ENCODE measurements at regions of chr22 and their contacts with region 1.

Region 1: GRCh38 chr22:39954584-39955055 is 5.6 kb upstream of the TMA7B start:
- DNase-seq: no peak
- H3K4me3 ChIP-seq: no peak overlapping the region
- H3K27ac ChIP-seq: no peak overlapping the region
- H3K4me1 ChIP-seq: peaks cover 0 to 5% (median 2%) of the 10 kb centered on the region in 4 experiments; a peak in 3 of 7 replicates
- H3K27me3 ChIP-seq: no peaks in the 10 kb centered on the region; a peak in 2 of 7 replicates
- CTCF ChIP-seq: no peak
- EP300 ChIP-seq: no peak
- POLR2A ChIP-seq: no peak
- RAD21 ChIP-seq: no peak

Region 2: GRCh38 chr22:39900306-39901227 is 54.1 kb before region 1 on chr22 and contains the start of gene GRAP2:
- CTCF ChIA-PET with region 1: no interaction called
- POLR2A ChIA-PET with region 1: no interaction called
- DNase-seq: no peak
- H3K4me3 ChIP-seq: no peak within 1 kb of the TSS
- H3K27ac ChIP-seq: no peak within 1 kb of the TSS
- H3K4me1 ChIP-seq: no peaks in the 10 kb centered on the region
- H3K27me3 ChIP-seq: no peaks in the 10 kb centered on the region
- CTCF ChIP-seq: no peak
- EP300 ChIP-seq: no peak
- POLR2A ChIP-seq: no peak
- RAD21 ChIP-seq: no peak
- total RNA-seq, gene GRAP2: not detected in 2 replicates

Region 3: GRCh38 chr22:39927544-39927943 is 27.1 kb before region 1 on chr22:
- CTCF ChIA-PET with region 1: interaction called, 16 read pairs
- POLR2A ChIA-PET with region 1: no interaction called
- DNase-seq: peak in 1 of 2 experiments; percentile 53
- H3K4me3 ChIP-seq: no peak overlapping the region
- H3K27ac ChIP-seq: no peak overlapping the region
- H3K4me1 ChIP-seq: peaks cover 0 to 2% (median 0%) of the 10 kb centered on the region in 4 experiments; a peak in 2 of 7 replicates
- H3K27me3 ChIP-seq: peaks cover 0 to 2% (median 0%) of the 10 kb centered on the region in 4 experiments; a peak in 1 of 7 replicates
- CTCF ChIP-seq: peak; percentile 65 to 83 (median 79)
- EP300 ChIP-seq: no peak
- POLR2A ChIP-seq: no peak
- RAD21 ChIP-seq: peak; percentile 63 to 74

Region 4: DNA sequence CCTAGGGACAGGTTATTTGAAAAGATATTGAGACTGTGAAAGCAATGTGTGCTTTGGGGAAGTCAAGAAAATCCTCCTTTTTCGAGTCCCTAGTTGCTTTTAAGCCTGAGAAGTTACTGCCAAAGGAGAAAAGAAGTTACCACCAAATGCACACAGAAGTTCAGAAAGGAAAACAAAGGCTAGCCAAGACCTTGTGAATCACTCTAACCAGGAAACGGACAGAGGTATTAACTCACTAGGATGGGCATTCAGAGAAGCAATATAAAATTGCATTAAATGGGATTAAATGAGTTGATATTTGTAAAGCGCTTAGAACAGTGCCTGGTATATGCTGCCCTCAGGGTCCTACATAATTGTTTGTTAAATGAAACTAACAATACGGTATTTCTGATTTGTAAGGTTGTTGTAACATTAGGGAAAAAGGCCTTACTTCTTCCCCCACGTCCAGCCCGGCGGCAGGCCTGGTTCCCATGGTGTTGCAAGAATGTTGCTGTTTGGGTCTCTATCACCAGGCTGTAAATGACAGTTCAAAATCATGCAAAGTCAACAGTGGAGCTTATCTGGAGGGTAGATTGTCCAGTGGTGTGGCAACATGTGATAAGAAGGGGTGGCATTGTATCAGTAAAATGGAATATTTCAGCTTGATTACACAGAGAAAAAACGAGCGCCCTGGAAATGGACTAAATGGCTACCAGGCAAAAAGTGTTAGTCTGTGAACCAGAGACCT is 12.6 kb after region 1 on chr22:
- CTCF ChIA-PET with region 1: interaction called, 18 read pairs
- POLR2A ChIA-PET with region 1: no interaction called
- DNase-seq: no peak
- H3K4me3 ChIP-seq: no peak overlapping the region
- H3K27ac ChIP-seq: no peak overlapping the region
- H3K4me1 ChIP-seq: no peaks in the 10 kb centered on the region; a peak in 1 of 7 replicates
- H3K27me3 ChIP-seq: no peaks in the 10 kb centered on the region; a peak in 2 of 7 replicates
- CTCF ChIP-seq: no peak
- EP300 ChIP-seq: no peak
- POLR2A ChIP-seq: no peak
- RAD21 ChIP-seq: no peak

Region 5: GRCh38 chr22:39973656-39974055 is 19.0 kb after region 1 on chr22:
- CTCF ChIA-PET with region 1: interaction called, 10 read pairs
- POLR2A ChIA-PET with region 1: interaction called, 5 read pairs
- DNase-seq: no peak
- H3K4me3 ChIP-seq: no peak overlapping the region
- H3K27ac ChIP-seq: no peak overlapping the region
- H3K4me1 ChIP-seq: peaks cover 0 to 7% (median 0%) of the 10 kb centered on the region in 4 experiments; a peak in 4 of 7 replicates
- H3K27me3 ChIP-seq: peaks cover 0 to 2% (median under 1%) of the 10 kb centered on the region in 4 experiments; a peak in 3 of 7 replicates
- CTCF ChIP-seq: no peak
- EP300 ChIP-seq: no peak
- POLR2A ChIP-seq: no peak
- RAD21 ChIP-seq: no peak

Region 6: GRCh38 chr22:40036591-40037225 is 82.1 kb after region 1 on chr22:
- CTCF ChIA-PET with region 1: interaction called, 10 read pairs
- POLR2A ChIA-PET with region 1: interaction called, 3 read pairs
- DNase-seq: peak; percentile 58 to 77
- H3K4me3 ChIP-seq: no peak overlapping the region
- H3K27ac ChIP-seq: no peak overlapping the region
- H3K4me1 ChIP-seq: no peaks in the 10 kb centered on the region
- H3K27me3 ChIP-seq: peaks cover 0 to 6% (median 2%) of the 10 kb centered on the region in 4 experiments; a peak in 2 of 7 replicates
- CTCF ChIP-seq: peak; percentile 92 to 98 (median 98)
- EP300 ChIP-seq: no peak
- POLR2A ChIP-seq: no peak
- RAD21 ChIP-seq: peak; percentile 98

Region 7: DNA sequence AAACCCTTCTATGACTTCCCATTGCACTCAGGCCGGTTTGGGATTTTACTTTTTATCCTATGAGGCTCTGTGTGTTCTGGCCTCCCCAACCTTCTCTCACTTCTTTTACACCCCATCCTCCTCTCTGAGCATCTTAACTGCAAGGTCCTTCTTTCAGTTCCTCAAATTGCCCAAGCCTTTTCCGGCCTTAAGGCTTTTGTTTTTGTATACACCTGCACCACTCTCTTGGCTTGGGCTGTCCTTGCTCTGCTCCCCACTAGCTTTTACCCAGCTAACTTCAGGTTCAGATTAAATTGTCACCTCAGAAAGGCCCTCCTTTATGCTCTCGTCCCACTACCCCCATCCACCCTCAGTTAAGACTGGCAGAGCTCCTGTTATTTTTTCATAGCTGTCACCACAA is 95.6 kb after region 1 on chr22:
- CTCF ChIA-PET with region 1: no interaction called
- POLR2A ChIA-PET with region 1: no interaction called
- DNase-seq: no peak
- H3K4me3 ChIP-seq: no peak overlapping the region
- H3K27ac ChIP-seq: no peak overlapping the region
- H3K4me1 ChIP-seq: peaks cover under 1 to 8% (median 5%) of the 10 kb centered on the region in 4 experiments; a peak in 5 of 7 replicates
- H3K27me3 ChIP-seq: no peaks in the 10 kb centered on the region
- CTCF ChIP-seq: no peak
- EP300 ChIP-seq: no peak
- POLR2A ChIP-seq: no peak
- RAD21 ChIP-seq: no peak